Activated naive CD4-positive, alpha-beta T cell treated with anti-CD3 and anti-CD28 coated beads for 36 hours (primary cell): ENCODE measurements at regions of chr1 and their contacts with region 1.

Region 1: DNA sequence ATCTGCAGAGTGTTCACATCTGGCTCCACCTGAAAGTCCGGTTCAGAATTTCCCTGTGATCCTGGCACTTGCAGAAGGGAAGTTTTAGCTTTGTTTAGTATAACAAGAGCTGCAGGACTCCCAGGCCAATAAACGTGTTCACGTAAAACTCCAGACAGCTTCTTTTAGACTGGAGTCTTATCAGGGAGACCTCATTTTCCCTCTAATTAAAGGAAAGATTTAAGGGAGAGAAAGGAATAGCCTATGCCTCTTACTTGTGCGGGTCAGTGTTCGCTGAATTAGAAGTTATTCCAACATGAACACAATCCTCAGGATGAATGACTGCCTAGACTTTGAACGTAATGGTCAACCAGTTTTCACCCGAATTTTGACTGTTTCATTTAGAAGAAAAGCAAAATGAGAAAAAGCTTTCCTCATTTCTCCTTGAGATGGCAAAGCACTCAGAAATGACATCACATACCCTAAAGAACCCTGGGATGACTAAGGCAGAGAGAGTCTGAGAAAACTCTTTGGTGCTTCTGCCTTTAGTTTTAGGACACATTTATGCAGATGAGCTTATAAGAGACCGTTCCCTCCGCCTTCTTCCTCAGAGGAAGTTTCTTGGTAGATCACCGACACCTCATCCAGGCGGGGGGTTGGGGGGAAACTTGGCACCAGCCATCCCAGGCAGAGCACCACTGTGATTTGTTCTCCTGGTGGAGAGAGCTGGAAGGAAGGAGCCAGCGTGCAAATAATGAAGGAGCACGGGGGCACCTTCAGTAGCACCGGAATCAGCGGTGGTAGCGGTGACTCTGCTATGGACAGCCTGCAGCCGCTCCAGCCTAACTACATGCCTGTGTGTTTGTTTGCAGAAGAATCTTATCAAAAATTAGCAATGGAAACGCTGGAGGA is 202.1 kb upstream of the SGIP1 start:
- DNase-seq: peak; percentile 76
- H3K4me3 Mint-ChIP-seq: peak overlapping the region; percentile 98
- H3K27ac Mint-ChIP-seq: peak overlapping the region; percentile 95
- H3K4me1 Mint-ChIP-seq: peaks cover 42% of the 10 kb centered on the region
- H3K27me3 Mint-ChIP-seq: no peaks in the 10 kb centered on the region

Region 2: DNA sequence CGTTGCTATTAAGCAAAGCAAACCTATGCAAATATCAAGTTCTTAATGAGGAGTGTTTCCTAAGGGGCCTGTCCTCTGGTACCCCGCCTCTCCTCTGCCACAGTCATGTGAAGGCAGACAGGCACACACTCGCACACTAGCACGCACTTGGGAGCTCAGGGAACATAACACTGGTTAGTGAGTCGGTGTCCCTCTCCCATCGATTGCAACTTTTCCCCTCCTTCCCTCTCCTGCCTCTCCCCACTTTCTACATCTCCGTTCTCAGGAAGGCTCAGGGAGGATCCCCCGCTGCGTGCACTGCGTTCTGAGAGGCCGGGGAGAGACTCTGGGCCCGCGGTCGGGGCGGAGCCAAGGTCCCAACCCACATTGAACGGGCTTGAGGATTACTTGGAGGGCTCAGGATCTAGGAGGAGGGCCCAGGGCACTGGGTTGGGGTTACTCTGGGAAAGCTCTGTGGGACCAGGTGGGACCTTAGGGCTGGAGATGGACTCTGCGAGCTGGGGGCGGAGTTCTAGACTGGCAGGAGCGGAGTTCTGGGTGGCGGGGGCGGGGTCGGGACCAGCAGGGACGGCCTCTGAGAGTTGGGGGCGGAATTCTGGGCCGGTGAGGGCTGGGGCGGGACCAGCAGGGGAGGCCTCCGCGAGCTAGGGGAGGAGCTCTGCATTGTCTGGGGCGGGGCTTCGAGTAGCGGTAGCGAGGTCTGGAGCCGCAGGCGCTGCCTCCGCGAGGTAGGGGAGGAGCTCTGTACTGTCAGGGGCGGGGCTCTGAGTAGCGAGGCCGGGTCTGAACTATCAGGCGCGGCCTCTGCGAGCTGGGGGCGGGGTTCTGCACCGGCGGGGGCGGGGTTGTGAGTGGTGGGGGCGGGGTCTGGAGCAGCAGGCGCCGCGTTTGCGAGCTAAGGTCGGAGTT is 912.0 kb before region 1 on chr1:
- CTCF ChIA-PET with region 1: no interaction called
- intact Hi-C with region 1: loop called (anchors 5 kb)
- DNase-seq: peak; percentile 99
- H3K4me3 Mint-ChIP-seq: no peak overlapping the region
- H3K27ac Mint-ChIP-seq: peak overlapping the region; percentile 89
- H3K4me1 Mint-ChIP-seq: peaks cover 20% of the 10 kb centered on the region
- H3K27me3 Mint-ChIP-seq: no peaks in the 10 kb centered on the region

Region 3: DNA sequence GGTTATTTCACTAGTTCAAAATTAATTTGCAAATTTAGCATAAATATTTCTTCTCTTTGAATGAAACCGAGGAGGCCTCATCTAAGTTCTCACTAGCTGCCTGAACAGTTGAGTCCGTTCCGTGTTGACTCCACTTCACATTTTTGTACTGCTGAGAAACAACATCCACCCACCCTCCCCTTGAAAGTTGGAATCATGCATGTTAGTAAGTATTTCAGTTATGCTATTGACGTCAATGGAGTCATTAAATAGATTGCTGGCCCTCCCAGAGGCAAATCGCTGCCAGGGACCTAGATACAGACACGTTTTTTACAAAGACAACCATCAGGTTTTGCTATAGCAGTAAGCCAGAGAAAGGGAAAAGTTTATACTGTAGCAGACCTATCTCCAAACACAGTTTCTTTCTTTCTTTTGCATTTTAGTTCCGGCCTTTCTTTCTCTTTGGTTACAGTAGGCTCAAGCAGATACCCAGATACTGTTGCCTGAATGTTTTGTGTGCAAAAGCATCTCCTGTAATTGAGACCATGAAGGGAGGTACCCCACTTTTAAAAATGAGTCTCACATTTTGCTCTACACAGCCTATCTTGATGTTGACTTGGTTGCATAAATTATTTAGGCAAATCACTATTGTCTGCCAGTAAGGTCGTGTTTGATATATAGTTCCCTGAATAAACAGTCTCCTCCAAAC is 60.5 kb before region 1 on chr1:
- CTCF ChIA-PET with region 1: interaction called, 20 read pairs
- intact Hi-C with region 1: loop called (anchors 1 kb)
- DNase-seq: peak; percentile 84
- H3K4me3 Mint-ChIP-seq: peak overlapping the region; percentile 54
- H3K27ac Mint-ChIP-seq: peak overlapping the region; percentile 90
- H3K4me1 Mint-ChIP-seq: peaks cover 74% of the 10 kb centered on the region
- H3K27me3 Mint-ChIP-seq: no peaks in the 10 kb centered on the region

Region 4: GRCh38 chr1:66350001-66350547 is 18.2 kb after region 1 on chr1:
- CTCF ChIA-PET with region 1: interaction called, 50 read pairs
- intact Hi-C with region 1: loop called (anchors 1 kb)
- DNase-seq: peak; percentile 80
- H3K4me3 Mint-ChIP-seq: peak overlapping the region; percentile 33
- H3K27ac Mint-ChIP-seq: peak overlapping the region; percentile 90
- H3K4me1 Mint-ChIP-seq: peaks cover 92% of the 10 kb centered on the region
- H3K27me3 Mint-ChIP-seq: no peaks in the 10 kb centered on the region

Region 5: DNA sequence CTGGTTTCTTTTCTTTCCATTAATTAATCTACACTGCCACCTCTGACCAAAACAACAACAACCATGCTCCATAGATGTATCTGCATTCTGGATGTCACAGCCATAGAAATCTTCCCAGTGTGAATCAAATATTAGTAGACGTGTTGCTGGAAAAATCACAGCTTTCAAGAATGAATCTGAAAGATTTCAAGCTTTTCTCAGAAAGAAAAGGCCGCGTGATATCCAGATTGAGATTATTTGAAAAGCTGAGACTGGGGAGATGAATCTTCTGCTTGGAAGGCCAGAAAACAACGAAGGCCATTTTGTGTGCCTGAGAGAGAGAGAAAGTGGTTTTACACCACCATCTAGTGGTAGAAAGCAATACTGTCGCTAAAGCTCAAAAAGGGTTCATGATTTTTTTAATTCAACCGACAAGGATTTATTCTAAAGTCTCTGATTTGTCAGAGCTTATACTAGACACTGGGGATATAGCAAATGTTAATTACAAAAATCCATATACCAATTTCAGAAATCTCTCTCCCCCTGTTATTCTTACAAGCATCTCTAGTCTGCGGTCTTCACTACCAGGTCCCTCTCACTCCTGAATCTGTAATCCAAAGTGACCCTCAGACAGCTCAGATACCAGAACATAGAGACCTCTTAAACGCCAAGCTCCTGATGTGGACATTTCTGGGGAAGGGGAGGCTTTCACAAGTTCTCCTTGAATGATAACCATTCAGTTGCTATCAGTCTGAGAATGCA is 114.5 kb after region 1 on chr1:
- CTCF ChIA-PET with region 1: interaction called, 34 read pairs
- intact Hi-C with region 1: loop called (anchors 2 kb)
- DNase-seq: peak; percentile 45
- H3K4me3 Mint-ChIP-seq: peak overlapping the region; percentile 74
- H3K27ac Mint-ChIP-seq: peak overlapping the region; percentile 92
- H3K4me1 Mint-ChIP-seq: peaks cover 26% of the 10 kb centered on the region
- H3K27me3 Mint-ChIP-seq: peaks cover 5% of the 10 kb centered on the region

Region 6: GRCh38 chr1:67194209-67194863 is 862.4 kb after region 1 on chr1:
- CTCF ChIA-PET with region 1: no interaction called
- intact Hi-C with region 1: loop called (anchors 5 kb)
- DNase-seq: no peak
- H3K4me3 Mint-ChIP-seq: no peak overlapping the region
- H3K27ac Mint-ChIP-seq: no peak overlapping the region
- H3K4me1 Mint-ChIP-seq: peaks cover 39% of the 10 kb centered on the region
- H3K27me3 Mint-ChIP-seq: no peaks in the 10 kb centered on the region